ENCODE measurements at regions of chr1 and their contacts with region 1.

Region 1: GRCh38 chr1:43021547-43022474 is 63.1 kb upstream of the SLC2A1 start:
- DNase-seq: peak; percentile 95
- H3K4me3 Mint-ChIP-seq: peak overlapping the region; percentile 41
- H3K27ac Mint-ChIP-seq: no peak overlapping the region
- H3K4me1 Mint-ChIP-seq: peaks cover 25% of the 10 kb centered on the region
- H3K27me3 Mint-ChIP-seq: no peaks in the 10 kb centered on the region
- CTCF ChIP-seq: no peak

Region 2: DNA sequence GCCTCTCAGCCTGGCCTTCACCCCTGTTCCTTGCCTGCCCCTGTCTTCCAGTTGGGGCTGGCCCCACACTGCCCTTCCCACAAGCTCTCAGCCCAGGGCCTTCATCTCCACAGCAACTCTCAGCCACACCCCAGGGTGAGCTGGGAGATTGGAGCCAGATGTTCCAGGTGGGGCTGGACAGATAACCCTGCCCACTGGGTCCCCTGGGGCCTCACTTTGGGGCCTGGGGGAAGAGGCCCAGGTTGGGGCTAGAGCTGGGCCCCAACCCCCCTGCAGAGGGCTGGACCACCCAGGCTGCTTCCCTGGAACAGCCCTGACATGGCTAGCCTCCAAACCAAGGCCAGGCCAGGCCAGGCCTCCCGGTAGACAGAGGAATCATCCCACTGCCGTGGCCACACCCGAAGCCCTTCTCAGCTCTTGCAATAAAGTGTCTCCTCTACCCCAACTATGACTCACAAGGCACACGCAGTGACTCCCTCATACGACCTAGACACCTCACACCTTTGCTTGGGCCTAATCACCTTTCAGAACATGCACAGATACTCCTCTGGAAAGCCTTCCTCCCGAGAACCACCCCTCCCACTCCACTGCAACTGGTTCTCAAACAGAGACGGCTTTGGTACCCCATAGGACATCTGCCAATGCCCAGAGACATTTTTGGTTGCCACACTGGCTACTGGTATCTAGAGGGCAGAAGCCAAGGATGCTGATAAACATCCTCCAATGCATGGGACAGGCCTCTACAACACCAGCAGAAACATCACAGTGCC is 85.3 kb before region 1 on chr1:
- CTCF ChIA-PET with region 1: interaction called, 8 read pairs
- POLR2A ChIA-PET with region 1: interaction called, 58 read pairs
- intact Hi-C with region 1: loop called (anchors 2 kb)
- DNase-seq: peak; percentile 94
- H3K4me3 Mint-ChIP-seq: peak overlapping the region; percentile 38
- H3K27ac Mint-ChIP-seq: peak overlapping the region; percentile 87
- H3K4me1 Mint-ChIP-seq: peaks cover 72% of the 10 kb centered on the region
- H3K27me3 Mint-ChIP-seq: no peaks in the 10 kb centered on the region
- CTCF ChIP-seq: no peak

Region 3: GRCh38 chr1:42941640-42942330 is 80.0 kb before region 1 on chr1:
- CTCF ChIA-PET with region 1: interaction called, 8 read pairs
- POLR2A ChIA-PET with region 1: interaction called, 58 read pairs
- intact Hi-C with region 1: loop called (anchors 2 kb)
- DNase-seq: peak; percentile 94
- H3K4me3 Mint-ChIP-seq: peak overlapping the region; percentile 54
- H3K27ac Mint-ChIP-seq: peak overlapping the region; percentile 58
- H3K4me1 Mint-ChIP-seq: peaks cover 78% of the 10 kb centered on the region
- H3K27me3 Mint-ChIP-seq: no peaks in the 10 kb centered on the region
- CTCF ChIP-seq: no peak

Region 4: DNA sequence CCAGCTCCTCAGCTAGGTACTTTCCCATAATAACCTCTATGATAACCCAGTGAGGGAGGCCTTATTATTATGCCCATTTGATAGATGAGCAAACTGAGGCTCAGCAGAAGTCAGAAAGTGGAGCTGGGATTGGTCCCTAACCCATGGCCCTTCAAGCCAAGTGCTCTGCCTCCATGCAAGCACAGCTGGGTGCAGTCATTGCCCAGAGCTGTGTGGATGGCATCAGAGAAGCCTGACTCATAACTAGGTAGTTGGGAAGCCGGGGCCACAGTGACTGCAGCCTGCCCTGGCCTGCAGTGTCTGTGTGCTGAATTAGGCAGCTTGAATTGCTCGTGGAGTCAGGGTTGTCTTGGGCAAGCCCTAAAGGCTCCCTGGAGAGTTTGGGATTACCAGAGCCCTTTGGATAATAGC is 26.8 kb after region 1 on chr1:
- CTCF ChIA-PET with region 1: no interaction called
- POLR2A ChIA-PET with region 1: interaction called, 38 read pairs
- intact Hi-C with region 1: no loop called
- DNase-seq: peak; percentile 79
- H3K4me3 Mint-ChIP-seq: no peak overlapping the region
- H3K27ac Mint-ChIP-seq: no peak overlapping the region
- H3K4me1 Mint-ChIP-seq: peaks cover 15% of the 10 kb centered on the region
- H3K27me3 Mint-ChIP-seq: no peaks in the 10 kb centered on the region
- CTCF ChIP-seq: no peak

Region 5: DNA sequence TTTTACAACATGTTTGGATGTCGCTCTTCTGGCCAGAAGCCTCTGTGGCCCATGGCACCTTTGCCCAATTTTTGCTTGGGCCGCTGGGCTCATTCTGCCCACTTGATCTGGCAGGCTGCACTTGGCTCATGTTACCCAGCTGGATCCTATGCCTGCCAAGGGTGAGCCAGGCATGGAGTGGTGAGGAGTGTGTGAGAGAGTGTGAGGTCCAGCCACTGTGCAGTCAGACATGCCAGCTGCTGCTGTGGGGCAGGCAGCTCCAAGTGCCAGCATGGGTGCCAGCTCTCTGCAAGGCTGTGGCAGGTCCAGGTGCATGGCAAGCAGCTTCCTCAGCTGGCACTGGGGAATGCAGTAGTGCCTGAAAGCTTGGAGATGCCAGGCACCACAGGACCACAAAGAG is 79.2 kb after region 1 on chr1:
- CTCF ChIA-PET with region 1: no interaction called
- POLR2A ChIA-PET with region 1: no interaction called
- intact Hi-C with region 1: no loop called
- DNase-seq: no peak
- H3K4me3 Mint-ChIP-seq: no peak overlapping the region
- H3K27ac Mint-ChIP-seq: no peak overlapping the region
- H3K4me1 Mint-ChIP-seq: no peaks in the 10 kb centered on the region
- H3K27me3 Mint-ChIP-seq: no peaks in the 10 kb centered on the region
- CTCF ChIP-seq: no peak

Measured in MCF 10A (cell line).